Heart right ventricle (tissue), 16 donors: ENCODE measurements at regions of chr2 and their contacts with region 1.

Region 1: GRCh38 chr2:167264380-167264779 is 376.1 kb downstream of the XIRP2 start:
- DNase-seq: no peak
- ATAC-seq: peak in 2 of 8 donors; percentile 53 to 55
- H3K4me3 ChIP-seq: no peak overlapping the region
- H3K27ac ChIP-seq: no peak overlapping the region
- H3K4me1 ChIP-seq: peaks cover 0 to 4% (median 0%) of the 10 kb centered on the region in 9 donors
- H3K27me3 ChIP-seq: no peaks in the 10 kb centered on the region
- CTCF ChIP-seq: peak in 6 of 9 donors; percentile 18 to 38 (median 32)

Region 2: GRCh38 chr2:167411367-167411766 is 147.0 kb after region 1 on chr2:
- intact Hi-C with region 1: loop called in 1 of 10 experiments (anchors 10 kb)
- DNase-seq: no peak
- ATAC-seq: no peak
- H3K4me3 ChIP-seq: no peak overlapping the region
- H3K27ac ChIP-seq: no peak overlapping the region
- H3K4me1 ChIP-seq: no peaks in the 10 kb centered on the region
- H3K27me3 ChIP-seq: no peaks in the 10 kb centered on the region
- CTCF ChIP-seq: peak in 5 of 9 donors; percentile 8 to 28 (median 21)